ENCODE measurements at regions of chr18 and their contacts with region 1.

Region 1: DNA sequence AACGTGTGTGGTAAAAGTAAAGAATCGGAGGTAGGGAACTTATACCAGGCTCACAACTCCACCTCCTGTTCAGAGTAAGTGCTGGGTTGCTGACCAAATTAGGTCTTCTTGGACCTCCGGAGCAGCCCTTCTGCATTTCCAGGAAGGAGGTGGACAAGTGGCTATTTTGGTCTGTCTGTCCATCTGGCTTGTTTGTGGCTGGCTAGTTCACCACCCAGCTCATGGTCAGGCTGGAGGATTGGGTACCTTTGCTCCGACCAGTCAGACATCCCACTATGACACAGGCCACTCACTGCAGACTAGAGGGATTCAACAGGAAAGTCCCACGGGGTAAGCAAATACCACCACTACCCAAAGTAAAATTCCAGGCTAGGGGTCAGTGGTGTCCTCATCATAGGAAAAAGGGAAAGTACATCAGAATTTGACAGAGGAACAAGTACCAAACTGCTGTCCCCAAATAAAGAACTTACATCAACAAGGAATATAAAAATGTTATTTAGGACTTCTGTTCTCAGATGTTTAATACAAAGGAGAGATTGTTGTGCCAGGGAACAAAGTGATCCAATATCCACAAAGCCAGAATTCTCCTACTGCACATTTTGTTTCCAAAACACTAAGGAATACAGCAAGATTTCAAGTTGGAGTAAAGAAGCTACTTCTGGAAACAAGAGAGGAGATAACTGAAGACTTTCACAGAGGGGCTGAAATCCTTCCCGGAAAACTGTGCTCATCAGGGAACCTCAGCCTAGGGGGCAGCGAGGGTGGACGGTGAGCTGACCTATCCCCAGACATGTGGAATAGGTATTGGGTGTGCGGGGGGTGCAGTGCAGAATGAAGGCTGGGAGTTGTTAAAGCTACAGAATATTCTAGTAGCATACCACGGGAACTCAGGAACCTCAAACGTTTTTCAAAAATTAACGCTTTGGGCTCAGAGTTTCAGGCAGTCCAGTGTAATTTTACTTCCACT is 56.9 kb downstream of the BCL2 start:
- DNase-seq: no peak
- H3K4me3 ChIP-seq: no peak overlapping the region
- H3K27ac ChIP-seq: peak overlapping the region; percentile 55 to 63
- H3K4me1 ChIP-seq: peaks cover 10% of the 10 kb centered on the region
- H3K27me3 ChIP-seq: no peaks in the 10 kb centered on the region
- CTCF ChIP-seq: no peak
- POLR2A ChIP-seq: no peak

Region 2: GRCh38 chr18:63131106-63131958 is 131.3 kb before region 1 on chr18:
- intact Hi-C with region 1: loop called (anchors 1 kb)
- DNase-seq: peak; percentile 68
- H3K4me3 ChIP-seq: no peak overlapping the region
- H3K27ac ChIP-seq: peak overlapping the region in 1 of 2 donors; percentile 42
- H3K4me1 ChIP-seq: peaks cover 12% of the 10 kb centered on the region
- H3K27me3 ChIP-seq: no peaks in the 10 kb centered on the region
- CTCF ChIP-seq: peak; percentile 51 to 72 (median 68)
- POLR2A ChIP-seq: no peak

Region 3: GRCh38 chr18:63148449-63149301 is 114.0 kb before region 1 on chr18:
- intact Hi-C with region 1: loop called (anchors 5 kb)
- DNase-seq: no peak
- H3K4me3 ChIP-seq: no peak overlapping the region
- H3K27ac ChIP-seq: peak overlapping the region; percentile 2 to 40
- H3K4me1 ChIP-seq: no peaks in the 10 kb centered on the region
- H3K27me3 ChIP-seq: no peaks in the 10 kb centered on the region
- CTCF ChIP-seq: no peak
- POLR2A ChIP-seq: no peak

Measured in prostate gland (tissue), 2 donors.